Activated CD8-positive, alpha-beta memory T cell treated with anti-CD3 and anti-CD28 coated beads, Interleukin-2, amount 10 ng/mL, durations not matched to agents 7 days and 5 days (primary cell): ENCODE measurements at regions of chr2 and their contacts with region 1.

Region 1: GRCh38 chr2:68742626-68743415 is 8.2 kb downstream of the ARHGAP25 start:
- DNase-seq: peak; percentile 39
- ATAC-seq: no peak
- H3K4me3 Mint-ChIP-seq: peak overlapping the region; percentile 31
- H3K27ac Mint-ChIP-seq: peak overlapping the region; percentile 65
- H3K4me1 Mint-ChIP-seq: peaks cover 89% of the 10 kb centered on the region
- H3K27me3 Mint-ChIP-seq: no peaks in the 10 kb centered on the region

Region 2: DNA sequence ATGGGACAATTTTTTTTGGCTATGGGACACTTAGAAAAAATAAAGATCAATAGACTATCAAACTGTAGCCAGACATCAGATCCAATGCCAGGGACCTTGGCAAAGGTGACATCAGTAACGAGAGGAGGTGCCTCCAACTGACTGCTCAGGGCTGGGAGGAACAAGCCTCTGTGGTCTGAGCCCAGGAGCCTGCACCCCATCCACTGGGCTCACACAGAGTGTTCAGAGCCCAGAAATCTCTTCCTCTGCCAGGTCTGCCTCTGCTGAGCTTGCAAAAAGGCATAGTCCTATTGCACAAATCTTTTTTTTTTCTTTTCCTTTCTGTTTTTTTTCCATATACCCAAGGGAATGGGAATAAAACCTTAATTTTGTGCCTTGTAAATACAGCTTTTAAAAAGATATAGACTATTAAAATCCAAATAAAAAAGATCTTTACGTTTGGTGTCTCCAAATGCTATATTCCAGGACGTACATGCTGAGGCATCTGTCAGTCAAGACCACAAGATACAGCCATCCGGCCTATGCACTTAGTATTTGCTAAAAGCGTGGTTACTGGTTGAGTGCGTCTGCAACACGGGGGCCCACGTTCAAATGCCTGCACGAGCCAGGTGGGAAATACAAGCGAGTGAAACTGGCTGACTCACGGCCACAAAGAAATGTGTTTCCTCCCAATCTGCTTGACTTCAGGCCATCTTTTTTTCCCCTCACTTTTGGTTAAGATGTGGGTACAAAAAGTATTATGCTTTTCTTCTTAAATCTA is 16.0 kb before region 1 on chr2:
- CTCF ChIA-PET with region 1: interaction called, 35 read pairs
- DNase-seq: peak; percentile 95
- ATAC-seq: peak; percentile 97
- H3K4me3 Mint-ChIP-seq: peak overlapping the region; percentile 43
- H3K27ac Mint-ChIP-seq: peak overlapping the region; percentile 88
- H3K4me1 Mint-ChIP-seq: peaks cover 82% of the 10 kb centered on the region
- H3K27me3 Mint-ChIP-seq: no peaks in the 10 kb centered on the region

Region 3: DNA sequence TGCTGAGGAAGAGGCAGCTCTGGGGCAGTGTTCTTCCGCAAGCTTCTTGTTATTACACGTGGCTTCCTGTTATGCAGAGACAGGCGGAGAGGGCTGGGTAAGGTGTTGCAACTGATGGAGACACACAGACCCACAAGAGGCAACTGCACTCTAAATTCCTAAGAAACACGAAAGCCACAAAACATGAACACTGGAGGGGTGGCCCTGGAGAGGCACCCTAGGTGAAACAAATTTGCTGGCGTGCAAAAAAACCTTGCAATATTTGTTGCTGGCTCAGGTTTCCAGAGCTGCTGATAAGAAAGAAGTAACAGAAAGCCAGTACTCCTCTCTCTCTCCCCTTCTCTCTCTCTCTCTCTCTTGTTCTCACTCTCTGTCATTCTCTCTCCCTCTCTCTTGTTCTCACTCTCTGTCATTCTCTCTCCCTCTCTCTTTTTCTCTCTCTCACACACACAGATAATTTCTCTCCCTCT is 23.6 kb after region 1 on chr2:
- CTCF ChIA-PET with region 1: interaction called, 93 read pairs
- DNase-seq: peak; percentile 89
- ATAC-seq: peak; percentile 71
- H3K4me3 Mint-ChIP-seq: peak overlapping the region; percentile 76
- H3K27ac Mint-ChIP-seq: peak overlapping the region; percentile 100
- H3K4me1 Mint-ChIP-seq: peaks cover 94% of the 10 kb centered on the region
- H3K27me3 Mint-ChIP-seq: no peaks in the 10 kb centered on the region